CD4-positive, alpha-beta T cell (primary cell): ENCODE measurements at regions of chr7 and their contacts with region 1.

Region 1: DNA sequence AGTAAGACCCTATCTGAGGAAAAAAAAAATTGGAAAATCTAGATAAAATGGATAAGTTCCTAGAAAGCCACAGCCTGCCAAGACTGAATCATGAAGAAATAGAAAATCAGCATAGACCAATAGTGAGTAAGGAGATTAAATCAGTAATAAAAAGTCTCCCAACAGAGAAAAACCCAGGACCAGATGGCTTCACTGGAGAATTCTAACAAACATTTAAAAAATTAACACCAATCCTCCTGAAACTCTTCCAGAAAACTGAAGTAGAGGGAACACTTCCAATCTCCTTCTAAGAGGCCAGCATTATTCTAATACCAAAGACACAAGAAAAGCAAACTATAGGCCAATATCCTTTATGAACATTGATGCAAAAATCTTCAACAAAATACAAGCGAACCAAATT is 8.8 kb upstream of the LIMK1 start:
- DNase-seq: no peak
- ATAC-seq: no peak
- H3K4me3 ChIP-seq: no peak overlapping the region
- H3K4me3 Mint-ChIP-seq: no peak overlapping the region
- H3K27ac ChIP-seq: no peak overlapping the region
- H3K27ac Mint-ChIP-seq: no peak overlapping the region
- H3K4me1 ChIP-seq: no peaks in the 10 kb centered on the region
- H3K4me1 Mint-ChIP-seq: no peaks in the 10 kb centered on the region
- H3K27me3 ChIP-seq: no peaks in the 10 kb centered on the region
- H3K27me3 Mint-ChIP-seq: no peaks in the 10 kb centered on the region
- CTCF ChIP-seq: no peak

Region 2: DNA sequence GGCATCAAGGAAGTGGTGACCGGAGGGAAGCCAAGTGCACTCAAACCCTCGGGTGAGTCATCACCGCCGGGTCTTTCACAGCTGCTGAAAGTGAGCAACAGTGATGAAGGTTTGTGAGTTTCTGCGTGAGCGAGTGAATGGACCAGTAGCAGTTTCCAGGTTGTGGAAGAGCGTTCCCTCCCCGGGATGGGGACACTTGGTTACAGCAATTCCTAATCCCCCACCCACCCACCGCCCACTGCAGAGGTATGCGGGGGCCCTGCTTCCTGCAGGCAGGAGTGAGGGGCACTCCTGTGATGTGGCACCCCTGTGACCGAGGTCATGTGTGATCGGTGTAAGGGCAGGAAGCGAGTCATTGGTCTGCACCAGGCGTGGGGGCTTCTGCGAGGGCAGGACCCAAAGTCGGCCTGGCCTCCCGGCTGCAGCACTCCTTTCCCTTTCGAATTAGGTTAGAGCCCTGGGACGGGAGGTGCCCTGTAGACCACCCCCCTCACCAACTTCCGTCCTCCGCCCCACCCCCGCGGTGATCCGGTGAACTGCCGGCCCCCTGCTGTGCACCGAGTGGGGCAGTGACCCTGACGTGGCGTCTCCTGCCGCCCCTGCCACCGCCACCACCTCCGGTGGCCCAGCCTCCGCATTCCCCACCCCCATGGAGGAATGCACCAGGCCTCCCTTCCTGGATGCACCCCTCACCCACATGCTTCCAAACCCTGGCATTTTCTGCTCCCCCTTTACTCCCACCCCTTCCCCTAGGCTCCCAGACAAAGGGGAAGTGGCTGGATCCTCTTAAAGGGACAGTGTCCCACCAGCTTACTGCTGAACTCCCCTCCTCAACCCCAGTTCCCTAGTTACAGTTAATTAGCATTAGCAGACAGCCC is 19.7 kb after region 1 on chr7:
- CTCF ChIA-PET with region 1: no interaction called
- POLR2A ChIA-PET with region 1: no interaction called
- intact Hi-C with region 1: loop called in 1 of 2 experiments (anchors 2 kb)
- DNase-seq: peak; percentile 30 to 87 (median 65)
- ATAC-seq: peak; percentile 75
- H3K4me3 ChIP-seq: peak overlapping the region; percentile 60
- H3K4me3 Mint-ChIP-seq: peak overlapping the region; percentile 92
- H3K27ac ChIP-seq: peak overlapping the region; percentile 54 to 70
- H3K27ac Mint-ChIP-seq: peak overlapping the region; percentile 91
- H3K4me1 ChIP-seq: peaks cover 27% of the 10 kb centered on the region
- H3K4me1 Mint-ChIP-seq: peaks cover 15% of the 10 kb centered on the region
- H3K27me3 ChIP-seq: no peaks in the 10 kb centered on the region
- H3K27me3 Mint-ChIP-seq: no peaks in the 10 kb centered on the region
- CTCF ChIP-seq: no peak